Activated CD8-positive, alpha-beta memory T cell treated with anti-CD3 and anti-CD28 coated beads, Interleukin-2, amount 10 ng/mL, durations not matched to agents 7 days and 5 days (primary cell): ENCODE measurements at regions of chr6 and their contacts with region 1.

Region 1: GRCh38 chr6:158072083-158072721 is 90.5 kb downstream of the SYNJ2 start:
- DNase-seq: peak; percentile 82
- ATAC-seq: peak; percentile 74
- H3K4me3 Mint-ChIP-seq: no peak overlapping the region
- H3K27ac Mint-ChIP-seq: peak overlapping the region; percentile 79
- H3K4me1 Mint-ChIP-seq: peaks cover 40% of the 10 kb centered on the region
- H3K27me3 Mint-ChIP-seq: no peaks in the 10 kb centered on the region

Region 2: DNA sequence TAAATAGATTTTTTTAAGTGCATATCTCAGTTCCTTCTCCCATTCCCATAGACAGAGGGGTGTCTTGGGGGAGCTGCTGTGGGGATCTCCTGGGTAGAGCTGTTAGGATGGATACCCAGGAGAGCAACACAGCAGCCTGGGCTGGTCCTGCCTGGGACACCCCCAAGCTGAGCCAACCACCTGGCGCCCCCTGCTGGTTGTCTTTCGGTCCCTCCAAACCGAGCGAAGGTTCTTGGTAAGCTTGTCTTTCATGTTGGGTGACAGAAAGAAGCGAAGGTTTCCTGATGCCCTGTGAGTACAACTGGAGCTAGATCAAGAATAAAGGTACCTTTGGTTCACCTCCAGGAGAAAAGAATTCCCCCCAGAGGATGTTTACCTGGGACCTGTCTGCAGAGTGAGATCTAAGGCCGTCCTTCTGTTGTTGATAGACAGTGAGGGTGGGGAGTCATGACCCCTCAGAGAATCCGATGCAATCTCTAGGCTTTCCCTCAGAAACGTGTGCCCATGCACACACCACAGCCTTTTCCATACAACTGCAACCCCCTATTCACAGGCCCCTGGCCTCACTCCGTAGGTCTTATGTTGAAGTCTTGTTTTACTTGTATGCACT is 198.4 kb before region 1 on chr6:
- CTCF ChIA-PET with region 1: interaction called, 10 read pairs
- DNase-seq: peak; percentile 87
- ATAC-seq: peak; percentile 87
- H3K4me3 Mint-ChIP-seq: no peak overlapping the region
- H3K27ac Mint-ChIP-seq: no peak overlapping the region
- H3K4me1 Mint-ChIP-seq: peaks cover 10% of the 10 kb centered on the region
- H3K27me3 Mint-ChIP-seq: no peaks in the 10 kb centered on the region

Region 3: GRCh38 chr6:158026054-158026900 is 45.9 kb before region 1 on chr6:
- CTCF ChIA-PET with region 1: interaction called, 39 read pairs
- DNase-seq: peak; percentile 91
- ATAC-seq: peak; percentile 83
- H3K4me3 Mint-ChIP-seq: peak overlapping the region; percentile 69
- H3K27ac Mint-ChIP-seq: peak overlapping the region; percentile 99
- H3K4me1 Mint-ChIP-seq: peaks cover 42% of the 10 kb centered on the region
- H3K27me3 Mint-ChIP-seq: no peaks in the 10 kb centered on the region

Region 4: DNA sequence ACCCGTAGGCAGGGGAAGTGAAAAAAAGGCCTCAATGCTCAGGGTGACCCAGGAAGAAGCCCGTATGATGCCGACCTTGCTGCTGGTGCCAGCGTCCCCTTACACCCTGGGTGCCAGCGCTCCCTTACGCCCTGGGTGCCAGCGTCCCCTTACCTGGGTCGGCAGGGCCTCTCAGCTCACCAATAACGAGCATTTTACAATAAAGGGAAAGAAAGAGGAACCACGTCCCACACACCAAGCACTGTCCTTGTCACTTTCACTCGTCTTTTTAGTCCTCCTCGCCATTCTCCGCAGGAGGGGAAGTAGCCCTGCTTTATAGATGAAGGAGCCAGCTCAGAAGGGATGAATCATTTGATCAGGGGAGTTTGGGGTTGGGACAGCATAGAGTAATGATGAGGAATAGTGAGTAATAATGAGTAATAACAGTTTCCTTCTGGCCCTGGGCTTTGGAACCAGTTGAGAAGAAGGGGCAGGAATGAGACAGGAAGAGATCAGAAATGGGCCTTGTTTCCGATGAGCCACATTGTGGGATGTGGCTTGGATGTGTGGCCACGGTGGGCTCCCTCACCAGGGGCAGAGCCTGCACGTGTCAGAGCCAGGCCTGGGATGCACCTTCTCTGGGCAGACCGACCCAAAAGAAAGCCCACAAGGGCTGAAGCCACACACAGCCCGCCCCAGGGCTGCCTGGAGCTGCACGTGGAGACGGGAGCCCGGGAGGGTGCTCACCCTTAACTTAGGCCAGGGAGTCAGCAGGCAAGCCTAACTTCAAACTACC is 14.8 kb before region 1 on chr6:
- CTCF ChIA-PET with region 1: interaction called, 16 read pairs
- DNase-seq: no peak
- ATAC-seq: peak; percentile 48
- H3K4me3 Mint-ChIP-seq: no peak overlapping the region
- H3K27ac Mint-ChIP-seq: peak overlapping the region; percentile 34
- H3K4me1 Mint-ChIP-seq: peaks cover 31% of the 10 kb centered on the region
- H3K27me3 Mint-ChIP-seq: no peaks in the 10 kb centered on the region

Region 5: GRCh38 chr6:158207422-158207788 is 135.2 kb after region 1 on chr6:
- CTCF ChIA-PET with region 1: no interaction called
- DNase-seq: peak; percentile 73
- ATAC-seq: peak; percentile 94
- H3K4me3 Mint-ChIP-seq: peak overlapping the region; percentile 56
- H3K27ac Mint-ChIP-seq: peak overlapping the region; percentile 91
- H3K4me1 Mint-ChIP-seq: peaks cover 52% of the 10 kb centered on the region
- H3K27me3 Mint-ChIP-seq: no peaks in the 10 kb centered on the region

Region 6: GRCh38 chr6:158313989-158314388 is 241.8 kb after region 1 on chr6:
- CTCF ChIA-PET with region 1: no interaction called
- DNase-seq: peak; percentile 60
- ATAC-seq: peak; percentile 61
- H3K4me3 Mint-ChIP-seq: peak overlapping the region; percentile 22
- H3K27ac Mint-ChIP-seq: no peak overlapping the region
- H3K4me1 Mint-ChIP-seq: peaks cover 22% of the 10 kb centered on the region
- H3K27me3 Mint-ChIP-seq: no peaks in the 10 kb centered on the region